Spleen (tissue), 13 donors: ENCODE measurements at regions of chr11 and their contacts with region 1.

Region 1: GRCh38 chr11:86218125-86219084 is 26.1 kb upstream of the EED start:
- DNase-seq: peak; percentile 76
- H3K4me3 ChIP-seq: peak overlapping the region in 4 of 8 donors; percentile 9 to 52 (median 19)
- H3K27ac ChIP-seq: peak overlapping the region in 4 of 8 donors; percentile 12 to 44 (median 32)
- H3K4me1 ChIP-seq: peaks cover 0 to 31% (median 14%) of the 10 kb centered on the region in 6 donors
- H3K27me3 ChIP-seq: no peaks in the 10 kb centered on the region
- CTCF ChIP-seq: peak; percentile 58 to 93 (median 83)
- POLR2A ChIP-seq: no peak

Region 2: DNA sequence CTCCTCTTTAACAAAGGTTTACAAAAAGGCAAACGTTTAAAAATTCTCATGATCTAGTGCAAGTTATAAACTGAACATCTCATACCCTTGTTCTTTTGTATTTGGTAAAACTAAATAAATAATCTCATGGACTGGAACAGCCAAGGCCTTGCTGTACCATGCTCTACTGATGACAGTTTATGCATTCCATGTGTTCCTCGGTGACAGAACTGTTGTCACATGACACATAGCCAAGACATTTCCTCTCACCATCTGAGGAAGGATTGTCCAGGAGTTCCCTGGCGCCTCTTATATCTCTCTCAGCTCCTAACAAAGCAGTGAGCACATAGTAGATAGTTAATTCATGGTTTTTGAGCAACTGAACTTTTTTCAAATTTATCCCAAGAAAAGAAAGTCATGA is 350.7 kb before region 1 on chr11:
- intact Hi-C with region 1: loop called (anchors 5 kb)
- DNase-seq: no peak
- H3K4me3 ChIP-seq: no peak overlapping the region
- H3K27ac ChIP-seq: no peak overlapping the region
- H3K4me1 ChIP-seq: no peaks in the 10 kb centered on the region
- H3K27me3 ChIP-seq: no peaks in the 10 kb centered on the region
- CTCF ChIP-seq: no peak
- POLR2A ChIP-seq: no peak

Region 3: DNA sequence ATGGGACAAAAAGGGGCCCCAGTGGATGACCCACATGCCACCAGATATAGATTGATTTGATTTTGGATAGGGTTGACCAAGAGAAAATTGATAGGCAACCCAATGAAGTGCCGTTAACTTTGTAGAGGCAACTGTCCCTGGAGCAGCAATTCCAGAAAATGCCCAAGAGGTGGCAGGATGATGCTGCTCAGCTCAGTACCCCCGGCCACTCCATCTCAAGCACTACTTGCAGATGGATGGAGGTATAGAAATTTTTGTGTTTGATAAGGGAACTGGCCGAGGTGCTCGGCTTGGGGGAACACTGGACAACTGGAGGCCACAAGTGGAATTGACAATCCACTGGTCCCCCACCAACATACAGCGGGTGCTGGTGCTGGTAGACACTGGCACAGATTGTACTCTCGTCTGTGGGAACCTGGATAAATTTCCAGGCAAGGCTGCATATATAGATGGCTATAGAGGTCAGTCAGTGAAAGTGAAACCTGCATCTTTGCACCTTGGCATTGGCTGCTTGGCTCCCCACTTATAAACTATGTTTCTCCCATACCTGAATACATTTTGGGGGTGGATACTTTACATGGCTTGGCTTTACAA is 276.9 kb before region 1 on chr11:
- intact Hi-C with region 1: loop called (anchors 5 kb)
- DNase-seq: no peak
- H3K4me3 ChIP-seq: no peak overlapping the region
- H3K27ac ChIP-seq: no peak overlapping the region
- H3K4me1 ChIP-seq: peaks cover 0 to 17% (median 7%) of the 10 kb centered on the region in 6 donors
- H3K27me3 ChIP-seq: no peaks in the 10 kb centered on the region
- CTCF ChIP-seq: peak in 10 of 11 experiments; percentile 19 to 78 (median 64)
- POLR2A ChIP-seq: no peak

Region 4: DNA sequence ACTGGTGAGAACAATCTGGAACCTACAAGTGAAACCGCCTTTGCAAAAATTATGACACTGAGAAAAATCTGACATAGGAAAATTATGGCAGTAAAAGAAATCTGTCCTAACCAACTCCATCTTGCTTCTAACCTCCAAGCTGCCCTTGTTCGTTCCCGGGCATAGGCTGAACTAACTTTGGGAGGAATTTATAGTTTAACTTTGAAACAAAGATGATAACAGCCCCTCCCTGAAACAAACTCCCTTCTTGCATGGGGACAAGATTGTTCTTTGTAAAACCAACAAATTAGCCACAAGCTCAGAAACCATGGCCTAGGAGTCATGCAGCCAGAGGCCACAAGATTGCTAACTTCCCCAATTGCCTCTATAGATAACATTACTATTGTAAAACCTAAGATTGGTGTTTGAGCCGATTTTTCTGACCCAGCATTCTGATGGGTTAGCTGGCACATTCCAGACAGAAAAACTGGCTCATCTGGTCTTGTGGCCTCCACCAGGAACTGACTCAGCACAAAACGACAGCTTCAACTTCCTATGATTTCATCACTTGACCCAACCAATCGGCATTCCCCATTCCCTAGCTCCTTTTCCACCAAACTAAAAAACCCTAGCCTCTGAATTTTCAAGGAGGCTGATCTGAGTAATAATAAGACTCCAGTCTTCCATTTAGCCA is 152.7 kb after region 1 on chr11:
- intact Hi-C with region 1: no loop called
- DNase-seq: no peak
- H3K4me3 ChIP-seq: no peak overlapping the region
- H3K27ac ChIP-seq: no peak overlapping the region
- H3K4me1 ChIP-seq: peaks cover 0 to 4% (median 0%) of the 10 kb centered on the region in 6 donors
- H3K27me3 ChIP-seq: peaks cover 0 to 8% (median 0%) of the 10 kb centered on the region in 7 donors
- CTCF ChIP-seq: no peak
- POLR2A ChIP-seq: no peak

Region 5: DNA sequence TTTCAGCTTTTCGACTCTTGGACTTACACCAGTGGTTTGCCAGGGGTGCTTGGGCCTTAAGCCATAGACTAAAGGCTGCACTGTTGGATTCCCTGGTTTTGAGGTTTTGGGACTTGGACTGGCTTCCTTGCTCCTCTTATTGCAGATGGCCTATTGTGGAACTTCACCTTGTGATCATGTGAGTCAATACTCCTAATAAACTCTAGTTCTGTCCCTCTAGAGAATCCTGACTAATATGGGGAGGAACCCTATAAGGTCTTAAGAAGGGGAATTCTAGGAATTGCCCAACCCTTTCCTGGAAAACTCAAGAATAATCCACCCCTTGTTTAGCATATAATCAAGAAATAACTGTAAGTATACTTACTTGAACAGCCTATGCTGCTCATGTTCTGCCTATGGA is 1311.1 kb after region 1 on chr11:
- intact Hi-C with region 1: no loop called
- DNase-seq: no peak
- H3K4me3 ChIP-seq: no peak overlapping the region
- H3K27ac ChIP-seq: no peak overlapping the region
- H3K4me1 ChIP-seq: no peaks in the 10 kb centered on the region
- H3K27me3 ChIP-seq: no peaks in the 10 kb centered on the region
- CTCF ChIP-seq: no peak
- POLR2A ChIP-seq: no peak